ENCODE measurements at regions of chr19 and their contacts with region 1.

Region 1: GRCh38 chr19:33339016-33339984 is 34.2 kb upstream of the CEBPG start:
- DNase-seq: peak; percentile 84
- ATAC-seq: peak; percentile 96
- H3K4me3 ChIP-seq: no peak overlapping the region
- H3K27ac ChIP-seq: peak overlapping the region; percentile 41
- H3K4me1 ChIP-seq: peaks cover 5% of the 10 kb centered on the region
- H3K27me3 ChIP-seq: peaks cover 10% of the 10 kb centered on the region
- CTCF ChIP-seq: no peak

Region 2: GRCh38 chr19:33132425-33132824 is 206.9 kb before region 1 on chr19:
- CTCF ChIA-PET with region 1: interaction called, 12 read pairs
- POLR2A ChIA-PET with region 1: no interaction called
- intact Hi-C with region 1: no loop called
- DNase-seq: no peak
- ATAC-seq: 0 out of 2 replicates have a peak, but pooled peaks have one; percentile 20
- H3K4me3 ChIP-seq: no peak overlapping the region
- H3K27ac ChIP-seq: no peak overlapping the region
- H3K4me1 ChIP-seq: no peaks in the 10 kb centered on the region
- H3K27me3 ChIP-seq: no peaks in the 10 kb centered on the region
- CTCF ChIP-seq: peak; percentile 44

Region 3: DNA sequence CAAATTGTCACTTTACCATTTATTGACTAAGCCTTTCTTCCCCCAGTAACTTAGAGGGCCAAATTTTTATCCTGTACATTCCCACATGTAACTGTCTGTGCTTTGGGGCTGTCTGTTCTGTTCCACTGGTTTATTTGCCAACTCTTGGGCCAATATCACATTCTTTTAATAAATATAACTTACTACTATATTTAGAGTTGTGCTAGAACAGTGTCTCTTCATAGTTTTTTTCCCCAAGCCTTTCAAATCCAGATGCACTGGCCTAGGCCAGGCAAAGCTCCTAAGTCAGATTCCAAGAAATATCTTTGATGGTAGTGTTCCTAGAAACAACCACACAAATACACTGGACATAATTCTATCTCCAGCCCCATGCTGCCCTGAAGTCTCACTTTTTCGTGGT is 18.3 kb after region 1 on chr19:
- CTCF ChIA-PET with region 1: no interaction called
- POLR2A ChIA-PET with region 1: no interaction called
- intact Hi-C with region 1: no loop called
- DNase-seq: no peak
- ATAC-seq: no peak
- H3K4me3 ChIP-seq: no peak overlapping the region
- H3K27ac ChIP-seq: no peak overlapping the region
- H3K4me1 ChIP-seq: no peaks in the 10 kb centered on the region
- H3K27me3 ChIP-seq: no peaks in the 10 kb centered on the region
- CTCF ChIP-seq: no peak

Region 4: GRCh38 chr19:33368074-33368864 is 29.0 kb after region 1 on chr19:
- CTCF ChIA-PET with region 1: no interaction called
- POLR2A ChIA-PET with region 1: no interaction called
- intact Hi-C with region 1: loop called (anchors 1 kb)
- DNase-seq: peak; percentile 77
- ATAC-seq: peak; percentile 91
- H3K4me3 ChIP-seq: no peak overlapping the region
- H3K27ac ChIP-seq: peak overlapping the region; percentile 14; the same call in 1 of the 2 replicates
- H3K4me1 ChIP-seq: peaks cover 11% of the 10 kb centered on the region; the same call in 1 of the 2 replicates
- H3K27me3 ChIP-seq: no peaks in the 10 kb centered on the region
- CTCF ChIP-seq: no peak

Region 5: GRCh38 chr19:33406521-33407139 is 67.3 kb after region 1 on chr19:
- CTCF ChIA-PET with region 1: no interaction called
- POLR2A ChIA-PET with region 1: no interaction called
- intact Hi-C with region 1: no loop called
- DNase-seq: peak; percentile 73
- ATAC-seq: peak; percentile 79
- H3K4me3 ChIP-seq: no peak overlapping the region
- H3K27ac ChIP-seq: no peak overlapping the region
- H3K4me1 ChIP-seq: no peaks in the 10 kb centered on the region
- H3K27me3 ChIP-seq: no peaks in the 10 kb centered on the region
- CTCF ChIP-seq: peak; percentile 70